Caco-2 (cell line): ENCODE measurements at regions of chr1 and their contacts with region 1.

Region 1: GRCh38 chr1:1406817-1407635 is at the start of gene MRPL20:
- DNase-seq: peak; percentile 90 to 91
- H3K4me3 ChIP-seq: peak within 1 kb of the TSS; percentile 86
- H3K4me3 Mint-ChIP-seq: peak within 1 kb of the TSS; percentile 87
- H3K27ac Mint-ChIP-seq: peak within 1 kb of the TSS; percentile 82
- H3K4me1 ChIP-seq: no peaks in the 10 kb centered on the region
- H3K4me1 Mint-ChIP-seq: no peaks in the 10 kb centered on the region
- H3K27me3 ChIP-seq: no peaks in the 10 kb centered on the region
- H3K27me3 Mint-ChIP-seq: no peaks in the 10 kb centered on the region
- CTCF ChIP-seq: no peak
- total RNA-seq, gene MRPL20: 109 and 110 TPM in 2 replicates

Region 2: GRCh38 chr1:1200851-1201810 is 205.9 kb before region 1 on chr1:
- CTCF ChIA-PET with region 1: no interaction called
- POLR2A ChIA-PET with region 1: no interaction called
- intact Hi-C with region 1: no loop called
- DNase-seq: peak in 1 of 2 experiments; percentile 63
- H3K4me3 ChIP-seq: peak overlapping the region; percentile 39
- H3K4me3 Mint-ChIP-seq: peak overlapping the region; percentile 35
- H3K27ac Mint-ChIP-seq: no peak overlapping the region
- H3K4me1 ChIP-seq: no peaks in the 10 kb centered on the region
- H3K4me1 Mint-ChIP-seq: no peaks in the 10 kb centered on the region
- H3K27me3 ChIP-seq: no peaks in the 10 kb centered on the region
- H3K27me3 Mint-ChIP-seq: no peaks in the 10 kb centered on the region
- CTCF ChIP-seq: no peak

Region 3: DNA sequence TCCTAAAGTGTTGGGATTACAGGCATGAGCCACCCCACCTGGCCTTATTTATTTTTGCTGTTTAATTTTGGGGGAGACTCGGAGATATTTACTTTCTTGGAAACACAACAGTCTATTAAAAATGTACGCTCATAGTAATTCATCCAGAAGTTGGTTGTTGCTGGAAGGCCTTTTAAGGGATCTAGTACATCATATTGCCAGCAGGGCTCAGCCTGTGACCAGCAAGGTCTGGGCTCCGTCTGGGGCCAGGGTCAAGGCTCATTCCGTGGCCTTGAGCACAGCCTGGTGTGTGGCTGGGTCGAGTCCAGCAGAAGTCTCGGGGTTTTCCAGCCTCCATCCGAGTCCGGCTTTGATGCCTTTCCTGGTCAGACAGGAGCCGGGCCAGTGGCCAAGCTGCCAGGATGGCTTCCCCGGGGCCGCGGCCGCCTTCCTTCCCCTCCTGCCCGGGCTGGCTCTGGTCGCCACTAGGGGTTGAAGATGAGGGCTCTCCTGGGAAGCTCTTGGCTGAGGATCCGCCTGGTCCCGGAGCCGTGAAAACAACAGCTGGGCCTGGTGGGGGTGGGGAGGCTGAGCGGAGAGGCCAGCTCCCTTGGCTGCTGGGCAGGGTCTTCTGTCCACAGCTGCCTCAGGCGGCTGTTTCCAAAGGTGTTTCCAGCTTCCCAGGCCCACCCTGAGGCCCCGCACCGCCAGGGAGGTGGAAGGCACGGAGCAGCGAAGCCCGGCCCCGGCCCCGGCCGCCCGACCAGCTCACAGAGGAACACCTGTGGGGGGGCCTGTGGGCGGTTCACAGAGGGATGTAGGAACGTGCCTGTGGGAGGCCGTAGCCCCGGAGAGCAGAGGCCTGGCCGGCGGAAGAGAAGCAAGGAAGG is 23.3 kb after region 1 on chr1:
- CTCF ChIA-PET with region 1: interaction called, 3 read pairs
- POLR2A ChIA-PET with region 1: interaction called, 8 read pairs
- intact Hi-C with region 1: loop called (anchors 1 kb)
- DNase-seq: peak in 1 of 2 experiments; percentile 73
- H3K4me3 ChIP-seq: no peak overlapping the region
- H3K4me3 Mint-ChIP-seq: no peak overlapping the region
- H3K27ac Mint-ChIP-seq: peak overlapping the region; percentile 59
- H3K4me1 ChIP-seq: peaks cover 63% of the 10 kb centered on the region
- H3K4me1 Mint-ChIP-seq: peaks cover 5% of the 10 kb centered on the region
- H3K27me3 ChIP-seq: no peaks in the 10 kb centered on the region
- H3K27me3 Mint-ChIP-seq: no peaks in the 10 kb centered on the region
- CTCF ChIP-seq: no peak

Region 4: GRCh38 chr1:1615256-1616044 is 208.4 kb after region 1 on chr1 and contains the start of gene MIB2:
- CTCF ChIA-PET with region 1: no interaction called
- POLR2A ChIA-PET with region 1: no interaction called
- intact Hi-C with region 1: no loop called
- DNase-seq: peak; percentile 95 to 97
- H3K4me3 ChIP-seq: peak within 1 kb of the TSS; percentile 70
- H3K4me3 Mint-ChIP-seq: peak within 1 kb of the TSS; percentile 89
- H3K27ac Mint-ChIP-seq: peak within 1 kb of the TSS; percentile 97
- H3K4me1 ChIP-seq: 0 out of 2 replicates have a peak, but pooled peaks cover 9% of the 10 kb centered on the region
- H3K4me1 Mint-ChIP-seq: peaks cover 7% of the 10 kb centered on the region
- H3K27me3 ChIP-seq: no peaks in the 10 kb centered on the region
- H3K27me3 Mint-ChIP-seq: no peaks in the 10 kb centered on the region
- CTCF ChIP-seq: no peak
- total RNA-seq, gene MIB2: 31.9 and 32.4 TPM in 2 replicates